RWPE1 (cell line): ENCODE measurements at regions of chr1 and their contacts with region 1.

Region 1: GRCh38 chr1:48109390-48110013 is 112.3 kb upstream of the TRABD2B start:
- DNase-seq: peak; percentile 29
- H3K27ac ChIP-seq: no peak overlapping the region
- CTCF ChIP-seq: peak; percentile 86

Region 2: DNA sequence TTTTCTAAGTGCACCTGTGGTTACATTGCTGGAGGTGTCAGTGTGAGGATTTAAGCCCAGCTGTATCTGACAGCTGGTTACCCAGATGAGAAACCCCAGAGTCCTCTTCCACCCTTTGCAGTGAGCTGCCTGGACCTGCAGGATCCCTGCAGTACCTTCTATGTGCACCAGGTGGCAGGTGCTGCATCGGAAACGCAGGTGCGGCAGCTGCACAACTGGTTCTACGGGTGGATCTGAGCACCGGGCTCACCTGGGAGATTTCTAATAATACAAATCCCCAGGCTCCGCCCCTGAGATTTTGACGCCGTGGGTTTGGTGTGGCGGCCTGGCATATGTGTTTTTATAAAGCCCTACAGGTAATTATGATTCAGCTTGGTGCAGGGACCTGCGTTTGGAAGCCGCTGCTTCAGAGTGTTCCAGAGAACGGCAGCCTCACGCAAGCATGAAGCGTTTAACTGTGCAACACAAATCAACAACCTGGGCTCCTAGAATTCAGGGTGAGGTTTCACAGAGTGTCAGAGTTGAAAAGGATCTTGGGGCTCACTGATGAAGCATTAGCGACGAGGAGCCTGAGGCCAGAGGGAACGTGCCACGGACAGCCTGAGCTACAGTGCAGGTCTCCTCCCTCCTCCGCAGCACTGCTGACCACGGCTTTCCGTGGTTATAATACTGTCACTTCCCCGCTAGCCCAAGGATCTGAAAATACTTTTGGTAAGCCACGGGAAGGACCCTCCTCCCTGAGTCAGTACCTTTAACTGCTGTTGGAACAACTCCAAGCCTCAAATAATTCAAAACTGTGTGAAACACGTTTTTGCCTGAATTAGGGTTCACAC is 15.6 kb before region 1 on chr1:
- CTCF ChIA-PET with region 1: interaction called, 11 read pairs
- POLR2A ChIA-PET with region 1: no interaction called
- DNase-seq: peak; percentile 93
- H3K27ac ChIP-seq: no peak overlapping the region
- CTCF ChIP-seq: peak; percentile 88

Region 3: GRCh38 chr1:48202030-48202752 is 92.7 kb after region 1 on chr1:
- CTCF ChIA-PET with region 1: interaction called, 22 read pairs
- POLR2A ChIA-PET with region 1: no interaction called
- DNase-seq: peak; percentile 48
- H3K27ac ChIP-seq: no peak overlapping the region
- CTCF ChIP-seq: peak; percentile 79